IMR-90 (cell line): ENCODE measurements at regions of chr1 and their contacts with region 1.

Region 1: GRCh38 chr1:245129319-245130240 is 25.2 kb upstream of the KIF26B start:
- DNase-seq: peak; percentile 8
- ATAC-seq: no peak; the same call in 1 of the 2 replicates
- H3K4me3 ChIP-seq: no peak overlapping the region
- H3K27ac ChIP-seq: no peak overlapping the region
- H3K4me1 ChIP-seq: no peaks in the 10 kb centered on the region
- H3K27me3 ChIP-seq: peaks cover 5% of the 10 kb centered on the region; the same call in 1 of the 2 replicates
- CTCF ChIP-seq: no peak
- POLR2A ChIP-seq: no peak
- RAD21 ChIP-seq: no peak

Region 2: DNA sequence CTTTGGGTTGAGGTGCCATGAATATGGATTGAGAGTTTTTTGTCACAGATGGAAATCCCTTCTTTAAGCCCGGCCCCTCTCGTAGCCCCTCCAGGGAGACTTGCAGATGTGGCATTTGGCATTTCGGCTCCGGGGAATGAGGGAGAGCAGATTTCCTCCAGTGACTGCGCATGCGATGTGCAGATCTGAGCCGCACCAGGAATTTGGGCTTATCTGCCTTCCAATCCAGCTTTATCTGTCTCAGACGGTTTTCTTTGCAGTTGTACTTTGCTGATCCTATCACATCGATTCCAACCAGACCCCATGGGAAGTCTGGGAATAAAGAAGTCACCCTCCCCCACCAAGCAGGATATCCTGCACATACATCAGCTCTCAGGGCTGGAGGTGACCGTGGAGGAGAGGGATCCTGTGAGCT is 36.9 kb after region 1 on chr1:
- CTCF ChIA-PET with region 1: interaction called, 12 read pairs
- POLR2A ChIA-PET with region 1: no interaction called
- dilution Hi-C with region 1: no loop called
- in situ Hi-C with region 1: no loop called
- intact Hi-C with region 1: no loop called
- DNase-seq: peak; percentile 17
- ATAC-seq: peak; percentile 80
- H3K4me3 ChIP-seq: peak overlapping the region; percentile 30
- H3K27ac ChIP-seq: no peak overlapping the region
- H3K4me1 ChIP-seq: no peaks in the 10 kb centered on the region
- H3K27me3 ChIP-seq: no peaks in the 10 kb centered on the region
- CTCF ChIP-seq: no peak
- POLR2A ChIP-seq: no peak
- RAD21 ChIP-seq: no peak